ENCODE measurements at regions of chr3 and their contacts with region 1.

Region 1: DNA sequence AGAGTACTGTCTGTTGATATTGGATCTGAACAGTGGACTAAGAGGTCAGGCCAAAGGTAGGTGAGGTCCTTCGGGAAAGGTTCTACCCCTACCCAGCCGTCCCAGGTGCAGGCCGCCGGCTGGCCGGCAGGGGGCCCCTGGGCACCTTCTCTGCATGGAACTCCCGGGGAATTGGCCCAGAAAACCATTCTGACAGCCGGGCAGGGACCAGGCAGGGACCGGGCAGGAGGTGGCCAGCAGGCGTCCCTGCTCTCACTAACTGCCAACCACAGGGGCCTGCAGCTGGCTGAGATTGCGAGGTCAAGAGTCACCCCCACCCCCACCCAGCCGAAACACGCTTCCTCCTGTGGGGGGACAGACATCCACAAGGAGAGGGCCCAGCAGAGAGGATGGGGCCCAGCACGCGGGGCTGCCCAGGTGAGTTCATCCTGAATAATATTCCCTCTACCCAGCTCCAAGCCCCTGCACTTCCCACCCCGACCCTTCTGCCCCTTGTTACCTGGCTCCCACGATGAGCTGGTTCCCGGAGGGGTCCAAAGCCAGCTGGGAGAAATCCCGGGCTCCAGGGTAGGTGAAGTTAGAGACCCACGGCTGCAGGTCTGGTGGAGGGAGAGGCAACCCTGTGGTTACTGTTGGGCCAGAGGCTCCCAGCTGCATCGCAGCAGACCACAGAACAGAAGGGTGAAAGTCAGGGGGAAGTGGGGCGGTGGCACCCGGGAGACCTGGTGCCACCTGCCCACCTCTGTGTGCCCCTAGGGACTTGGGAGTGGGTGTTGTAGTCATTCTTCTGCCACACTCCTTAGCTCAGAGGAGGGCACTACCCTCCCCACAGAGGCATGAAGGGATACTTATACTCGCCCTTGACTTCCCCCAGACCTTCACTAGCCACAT is 84.4 kb downstream of the SEMA5B start:
- H3K4me3 ChIP-seq: no peak overlapping the region
- H3K27ac ChIP-seq: no peak overlapping the region
- H3K4me1 ChIP-seq: no peaks in the 10 kb centered on the region
- CTCF ChIP-seq: peak; percentile 71

Region 2: GRCh38 chr3:122957707-122958689 is 14.8 kb after region 1 on chr3:
- CTCF ChIA-PET with region 1: interaction called, 12 read pairs
- POLR2A ChIA-PET with region 1: no interaction called
- H3K4me3 ChIP-seq: no peak overlapping the region
- H3K27ac ChIP-seq: no peak overlapping the region
- H3K4me1 ChIP-seq: 0 out of 2 replicates have a peak, but pooled peaks cover 2% of the 10 kb centered on the region
- CTCF ChIP-seq: no peak

Region 3: DNA sequence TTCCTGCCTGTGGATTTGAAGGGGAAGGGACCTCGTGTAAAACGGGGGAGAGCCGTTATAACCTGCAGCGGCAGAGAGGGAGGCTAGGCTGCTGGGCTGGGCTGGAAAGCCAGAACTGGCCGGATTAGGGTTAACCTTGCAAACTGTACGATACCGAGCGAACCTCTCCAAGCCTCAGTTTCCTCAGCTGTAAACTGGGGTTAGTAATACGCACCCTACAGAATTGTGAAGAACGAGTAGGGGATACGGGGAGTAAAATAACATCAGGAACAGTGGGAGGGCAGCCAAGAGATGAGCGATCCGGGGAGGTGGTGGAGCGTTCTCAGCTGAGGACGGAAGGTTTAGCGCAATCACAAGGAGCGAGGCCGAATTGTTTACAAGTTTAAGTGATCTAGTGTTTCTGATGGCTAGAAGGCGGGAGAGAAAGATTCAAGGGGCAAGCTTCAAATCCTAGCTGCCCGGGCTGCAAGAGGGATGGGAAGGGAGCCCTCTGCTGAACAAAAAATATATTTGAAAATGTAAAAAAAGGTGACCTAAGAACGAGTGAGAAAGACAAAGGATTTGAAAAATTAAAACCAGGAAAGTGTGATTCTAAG is 85.1 kb after region 1 on chr3:
- CTCF ChIA-PET with region 1: interaction called, 84 read pairs
- POLR2A ChIA-PET with region 1: interaction called, 4 read pairs
- H3K4me3 ChIP-seq: peak overlapping the region; percentile 47
- H3K27ac ChIP-seq: peak overlapping the region; percentile 61
- H3K4me1 ChIP-seq: 0 out of 2 replicates have a peak, but pooled peaks cover 3% of the 10 kb centered on the region
- CTCF ChIP-seq: peak; percentile 61

Measured in HEK293 (cell line).